ENCODE measurements at regions of chr11 and their contacts with region 1.

Region 1: GRCh38 chr11:86456052-86456939 is 81.6 kb downstream of the CCDC81 start:
- DNase-seq: peak; percentile 24 to 92
- H3K4me3 ChIP-seq: no peak overlapping the region
- H3K27ac ChIP-seq: no peak overlapping the region
- H3K4me1 ChIP-seq: peaks cover 9 to 22% of the 10 kb centered on the region in 2 donors
- H3K27me3 ChIP-seq: no peaks in the 10 kb centered on the region
- CTCF ChIP-seq: peak; percentile 83 to 92 (median 90)

Region 2: GRCh38 chr11:86515297-86516094 is 59.2 kb after region 1 on chr11:
- intact Hi-C with region 1: loop called (anchors 5 kb)
- DNase-seq: no peak
- H3K4me3 ChIP-seq: no peak overlapping the region
- H3K27ac ChIP-seq: peak overlapping the region in 1 of 2 donors; percentile 19
- H3K4me1 ChIP-seq: peaks cover 8 to 39% of the 10 kb centered on the region in 2 donors
- H3K27me3 ChIP-seq: no peaks in the 10 kb centered on the region
- CTCF ChIP-seq: no peak

Region 3: GRCh38 chr11:86671682-86672621 is 215.7 kb after region 1 on chr11 and contains the start of gene ME3:
- intact Hi-C with region 1: loop called (anchors 5 kb)
- DNase-seq: peak in 1 of 2 donors; percentile 85
- H3K4me3 ChIP-seq: peak within 1 kb of the TSS; percentile 81 to 95
- H3K27ac ChIP-seq: peak within 1 kb of the TSS; percentile 93 to 94
- H3K4me1 ChIP-seq: peaks cover 0 to 22% of the 10 kb centered on the region in 2 donors
- H3K27me3 ChIP-seq: no peaks in the 10 kb centered on the region
- CTCF ChIP-seq: peak in 1 of 3 experiments; percentile 11
- total RNA-seq, gene ME3: 34.2 TPM

Region 4: GRCh38 chr11:86802601-86803051 is 346.3 kb after region 1 on chr11:
- intact Hi-C with region 1: loop called (anchors 5 kb)
- DNase-seq: no peak
- H3K4me3 ChIP-seq: peak overlapping the region in 1 of 2 donors; percentile 67
- H3K27ac ChIP-seq: peak overlapping the region; percentile 67 to 76
- H3K4me1 ChIP-seq: peaks cover 0 to 16% of the 10 kb centered on the region in 2 donors
- H3K27me3 ChIP-seq: no peaks in the 10 kb centered on the region
- CTCF ChIP-seq: peak in 2 of 3 experiments; percentile 33 to 57

Region 5: DNA sequence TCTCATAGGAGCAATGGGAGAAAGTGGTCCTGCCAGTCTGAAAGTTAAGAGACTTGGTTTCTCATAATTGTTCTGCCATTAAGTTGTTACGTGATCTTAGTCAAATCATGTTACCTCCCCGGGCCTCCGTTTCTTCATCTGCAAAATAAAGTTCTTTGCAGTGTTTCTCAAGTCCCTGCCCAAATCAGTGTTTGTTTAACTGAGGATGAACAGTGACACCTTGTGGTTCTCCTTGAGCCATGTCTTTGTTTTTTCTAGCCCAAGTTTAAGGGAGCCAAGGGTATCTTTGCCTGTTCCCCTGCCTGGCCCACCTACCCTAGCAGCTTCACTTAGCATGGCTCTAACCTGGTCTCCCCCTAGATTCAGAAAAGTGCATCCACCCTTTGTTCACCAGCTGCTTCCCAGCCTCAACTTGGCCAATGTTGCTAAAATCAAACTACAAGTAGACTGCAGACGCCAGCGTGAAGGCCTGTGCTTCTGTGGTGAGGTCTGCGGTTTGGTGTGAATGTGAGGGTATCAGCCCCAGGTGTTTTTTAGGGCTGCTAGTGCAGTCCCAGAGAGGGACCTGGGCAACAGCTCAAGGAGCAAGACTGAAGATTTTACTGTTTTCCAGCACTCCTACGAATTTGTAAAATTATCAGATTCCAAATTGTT is 463.4 kb after region 1 on chr11:
- intact Hi-C with region 1: loop called (anchors 5 kb)
- DNase-seq: no peak
- H3K4me3 ChIP-seq: peak overlapping the region in 1 of 2 donors; percentile 6
- H3K27ac ChIP-seq: peak overlapping the region; percentile 85 to 89
- H3K4me1 ChIP-seq: peaks cover 8 to 57% of the 10 kb centered on the region in 2 donors
- H3K27me3 ChIP-seq: no peaks in the 10 kb centered on the region
- CTCF ChIP-seq: peak; percentile 52 to 65 (median 59)